Spleen (tissue), 13 donors: ENCODE measurements at regions of chr2 and their contacts with region 1.

Region 1: GRCh38 chr2:199861132-199861774 is 10.3 kb upstream of the FTCDNL1 start:
- DNase-seq: no peak
- H3K4me3 ChIP-seq: no peak overlapping the region
- H3K27ac ChIP-seq: no peak overlapping the region
- H3K4me1 ChIP-seq: peaks cover 0 to 6% (median 0%) of the 10 kb centered on the region in 6 donors
- H3K27me3 ChIP-seq: peaks cover 0 to 7% (median 0%) of the 10 kb centered on the region in 7 donors
- CTCF ChIP-seq: peak; percentile 14 to 63 (median 55)
- POLR2A ChIP-seq: no peak

Region 2: DNA sequence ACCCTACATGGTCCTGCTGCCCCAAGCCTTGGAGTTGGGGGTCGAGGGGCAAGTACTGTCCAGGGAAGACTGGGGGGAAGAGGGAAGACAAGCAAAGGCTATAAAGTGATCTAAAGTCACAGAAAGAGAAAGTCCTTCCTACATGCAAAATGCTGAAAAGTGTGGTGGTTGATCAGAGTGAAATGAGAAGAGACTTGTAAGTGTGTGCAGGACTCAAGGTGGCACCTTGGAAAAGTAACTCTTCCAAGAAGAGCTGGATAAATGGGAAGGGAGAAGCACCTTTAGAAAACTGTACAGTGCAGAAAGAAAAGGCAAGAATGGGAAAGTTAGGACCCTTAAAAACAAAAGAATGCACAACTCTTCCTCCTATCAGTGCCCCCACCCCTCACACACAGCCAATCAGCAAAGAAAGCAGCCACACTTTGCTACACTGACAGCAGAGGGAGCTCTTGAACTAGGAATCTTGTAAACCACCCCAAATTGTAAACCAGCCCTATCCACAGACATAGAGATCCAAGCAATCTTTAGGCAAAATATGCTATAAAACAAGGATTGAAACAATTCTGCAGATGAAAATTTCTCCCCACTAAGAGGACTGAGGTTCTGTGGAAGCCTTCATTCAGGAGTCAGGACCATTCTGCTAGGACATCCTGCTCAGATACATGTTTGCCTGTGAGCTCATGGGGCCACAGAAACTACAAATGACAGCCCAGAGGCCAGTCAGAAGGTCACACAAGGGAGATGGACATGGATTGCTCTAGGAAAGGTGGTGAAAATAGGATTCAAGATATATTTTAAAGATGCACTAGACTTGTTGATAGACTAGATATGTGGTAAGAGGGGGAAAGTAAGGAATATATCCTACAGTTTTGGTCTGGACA is 156.7 kb before region 1 on chr2:
- intact Hi-C with region 1: loop called (anchors 10 kb)
- DNase-seq: no peak
- H3K4me3 ChIP-seq: no peak overlapping the region
- H3K27ac ChIP-seq: no peak overlapping the region
- H3K4me1 ChIP-seq: no peaks in the 10 kb centered on the region
- H3K27me3 ChIP-seq: no peaks in the 10 kb centered on the region
- CTCF ChIP-seq: peak in 10 of 11 experiments; percentile 17 to 65 (median 54)
- POLR2A ChIP-seq: no peak